H1 (cell line): ENCODE measurements at regions of chr6 and their contacts with region 1.

Region 1: DNA sequence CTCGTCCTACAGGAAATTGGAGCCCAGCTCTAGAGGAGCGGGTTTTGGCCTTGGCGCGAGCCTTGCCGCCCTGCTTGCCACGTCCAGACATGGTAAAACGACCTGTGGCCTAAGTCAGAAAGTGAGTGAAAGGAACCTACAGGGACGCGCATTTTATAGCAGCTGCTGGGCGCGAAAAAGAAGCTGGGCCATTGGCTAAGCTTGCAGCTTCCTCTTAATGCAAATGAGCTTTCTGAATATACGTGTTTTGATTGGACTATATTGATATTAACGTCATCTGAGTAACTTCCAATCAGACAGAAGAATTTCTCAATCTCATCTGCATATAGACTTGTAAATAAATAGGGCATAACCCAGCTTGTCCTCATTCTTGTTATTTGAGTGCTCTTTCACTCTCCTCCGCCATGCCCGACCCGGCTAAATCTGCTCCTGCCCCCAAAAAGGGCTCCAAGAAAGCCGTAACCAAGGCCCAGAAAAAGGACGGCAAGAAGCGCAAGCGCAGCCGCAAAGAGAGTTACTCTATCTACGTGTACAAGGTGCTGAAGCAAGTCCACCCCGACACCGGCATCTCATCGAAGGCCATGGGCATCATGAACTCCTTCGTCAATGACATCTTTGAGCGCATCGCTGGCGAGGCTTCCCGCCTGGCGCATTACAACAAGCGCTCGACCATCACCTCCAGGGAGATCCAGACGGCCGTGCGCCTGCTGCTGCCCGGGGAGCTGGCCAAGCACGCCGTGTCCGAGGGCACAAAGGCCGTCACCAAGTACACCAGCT is 18.9 kb downstream of the OR2B2 start:
- DNase-seq: peak; percentile 88 to 96
- H3K4me3 ChIP-seq: peak overlapping the region; percentile 94 to 99 (median 97)
- H3K27ac ChIP-seq: peak overlapping the region; percentile 95
- H3K4me1 ChIP-seq: peaks cover 3 to 9% (median 3%) of the 10 kb centered on the region in 4 experiments; a peak in 5 of 7 replicates
- H3K27me3 ChIP-seq: no peaks in the 10 kb centered on the region
- CTCF ChIP-seq: no peak
- EP300 ChIP-seq: no peak
- POLR2A ChIP-seq: peak; percentile 99 to 100
- RAD21 ChIP-seq: no peak

Region 2: DNA sequence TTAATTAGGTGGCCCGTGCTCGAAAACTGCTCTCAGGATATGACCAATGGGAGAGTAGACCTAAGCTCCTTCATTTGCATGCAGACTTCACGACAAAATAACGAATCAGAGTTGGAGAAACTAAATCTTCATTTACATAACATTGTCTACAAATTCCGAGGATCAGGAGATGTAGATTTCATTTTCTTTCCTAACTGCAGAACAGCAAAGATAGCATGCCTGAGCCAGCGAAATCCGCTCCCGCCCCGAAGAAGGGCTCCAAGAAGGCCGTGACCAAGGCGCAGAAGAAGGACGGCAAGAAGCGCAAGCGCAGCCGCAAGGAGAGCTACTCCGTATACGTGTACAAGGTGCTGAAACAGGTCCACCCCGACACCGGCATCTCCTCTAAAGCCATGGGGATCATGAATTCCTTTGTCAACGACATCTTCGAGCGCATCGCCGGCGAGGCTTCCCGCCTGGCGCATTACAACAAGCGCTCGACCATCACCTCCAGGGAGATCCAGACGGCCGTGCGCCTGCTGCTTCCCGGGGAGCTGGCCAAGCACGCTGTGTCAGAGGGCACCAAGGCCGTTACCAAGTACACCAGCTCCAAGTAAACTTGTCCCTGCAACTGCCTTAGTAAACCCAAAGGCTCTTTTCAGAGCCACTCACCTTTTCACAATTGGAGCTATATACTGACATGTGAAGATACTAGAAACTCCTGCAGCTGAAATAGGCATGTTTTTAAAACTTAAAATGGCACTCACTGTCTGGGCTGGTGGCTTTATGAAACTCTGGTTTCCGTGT is 1709.5 kb before region 1 on chr6:
- CTCF ChIA-PET with region 1: no interaction called
- POLR2A ChIA-PET with region 1: interaction called, 11 read pairs
- DNase-seq: peak in 1 of 2 experiments; percentile 82
- H3K4me3 ChIP-seq: peak overlapping the region; percentile 45 to 73 (median 70)
- H3K27ac ChIP-seq: peak overlapping the region; percentile 97
- H3K4me1 ChIP-seq: peaks cover 0 to 17% (median 8%) of the 10 kb centered on the region in 4 experiments; a peak in 5 of 7 replicates
- H3K27me3 ChIP-seq: no peaks in the 10 kb centered on the region
- CTCF ChIP-seq: no peak
- EP300 ChIP-seq: no peak
- POLR2A ChIP-seq: peak; percentile 94 to 99
- RAD21 ChIP-seq: no peak

Region 3: DNA sequence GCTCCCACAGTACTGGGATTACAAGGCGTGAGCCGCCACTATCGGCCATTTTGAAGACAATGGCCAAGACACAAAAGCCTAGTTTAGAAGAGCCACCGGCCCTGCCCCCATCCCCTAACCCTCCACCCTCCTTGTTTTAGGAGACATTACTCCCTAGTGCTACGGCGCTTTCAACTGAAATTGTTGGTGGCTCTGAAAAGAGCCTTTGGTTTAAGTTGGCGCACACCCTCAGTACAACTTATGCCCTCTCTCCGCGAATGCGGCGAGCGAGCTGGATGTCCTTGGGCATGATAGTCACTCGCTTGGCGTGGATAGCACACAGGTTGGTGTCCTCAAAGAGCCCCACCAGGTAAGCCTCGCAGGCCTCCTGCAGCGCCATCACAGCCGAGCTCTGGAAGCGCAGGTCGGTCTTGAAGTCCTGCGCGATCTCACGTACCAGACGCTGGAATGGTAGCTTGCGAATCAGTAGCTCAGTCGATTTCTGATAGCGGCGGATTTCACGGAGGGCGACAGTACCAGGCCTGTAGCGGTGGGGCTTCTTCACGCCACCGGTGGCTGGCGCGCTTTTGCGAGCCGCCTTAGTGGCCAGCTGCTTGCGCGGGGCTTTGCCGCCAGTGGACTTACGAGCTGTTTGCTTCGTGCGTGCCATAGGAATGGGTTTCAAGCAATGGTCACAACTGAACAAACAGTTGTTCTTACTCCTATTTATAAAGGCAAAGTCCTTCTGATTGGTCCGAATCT is 1643.1 kb before region 1 on chr6:
- CTCF ChIA-PET with region 1: no interaction called
- POLR2A ChIA-PET with region 1: interaction called, 19 read pairs
- DNase-seq: peak in 1 of 2 experiments; percentile 73
- H3K4me3 ChIP-seq: peak overlapping the region; percentile 75 to 98 (median 90)
- H3K27ac ChIP-seq: peak overlapping the region; percentile 97
- H3K4me1 ChIP-seq: peaks cover 0 to 5% (median 4%) of the 10 kb centered on the region in 4 experiments; a peak in 5 of 7 replicates
- H3K27me3 ChIP-seq: no peaks in the 10 kb centered on the region
- CTCF ChIP-seq: peak in 2 of 3 experiments; percentile 23 to 34; a peak in 2 of 4 replicates
- EP300 ChIP-seq: 0 out of 3 replicates have a peak, but pooled peaks of 1 of the 2 experiments have one; percentile 34
- POLR2A ChIP-seq: peak; percentile 98
- RAD21 ChIP-seq: no peak

Region 4: DNA sequence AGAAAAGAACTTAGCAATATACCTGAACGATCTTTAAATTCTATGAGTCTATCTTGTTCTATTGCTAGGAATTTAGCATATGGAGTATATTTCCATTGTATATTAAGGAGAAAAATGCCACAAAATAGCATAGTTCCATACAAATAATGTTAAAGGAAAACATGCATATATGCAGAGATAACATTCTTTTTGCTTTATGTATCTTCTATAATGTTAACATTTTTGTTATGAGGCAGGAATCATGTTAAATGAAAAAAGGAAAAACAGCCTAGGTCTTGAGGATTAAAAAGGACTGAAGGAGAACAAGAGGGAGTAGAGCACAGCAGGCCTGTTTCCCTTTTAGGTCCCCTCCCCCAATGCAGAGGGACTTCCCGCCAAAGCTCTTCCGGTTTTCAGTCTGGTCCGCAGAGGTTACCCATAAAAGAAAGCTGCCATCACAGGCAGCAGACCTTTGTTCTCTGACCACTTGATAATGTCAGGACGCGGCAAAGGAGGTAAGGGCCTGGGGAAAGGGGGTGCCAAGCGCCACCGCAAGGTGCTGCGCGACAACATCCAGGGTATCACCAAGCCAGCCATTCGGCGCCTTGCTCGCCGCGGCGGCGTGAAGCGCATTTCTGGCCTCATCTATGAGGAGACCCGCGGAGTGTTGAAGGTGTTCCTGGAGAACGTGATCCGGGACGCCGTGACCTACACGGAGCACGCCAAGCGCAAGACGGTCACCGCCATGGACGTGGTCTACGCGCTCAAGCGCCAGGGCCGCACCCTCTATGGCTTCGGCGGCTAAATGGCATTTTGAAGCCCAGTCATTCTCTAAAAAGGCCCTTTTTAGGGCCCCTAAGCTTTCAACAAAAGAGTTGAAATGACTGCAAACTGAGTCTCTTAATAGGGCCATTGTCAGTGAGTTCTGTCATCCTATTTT is 754.2 kb before region 1 on chr6:
- CTCF ChIA-PET with region 1: no interaction called
- POLR2A ChIA-PET with region 1: interaction called, 49 read pairs
- DNase-seq: peak; percentile 91 to 92
- H3K4me3 ChIP-seq: peak overlapping the region; percentile 50 to 95 (median 70)
- H3K27ac ChIP-seq: peak overlapping the region; percentile 95
- H3K4me1 ChIP-seq: peaks cover 0 to 10% (median 4%) of the 10 kb centered on the region in 4 experiments; a peak in 5 of 7 replicates
- H3K27me3 ChIP-seq: no peaks in the 10 kb centered on the region
- CTCF ChIP-seq: no peak
- EP300 ChIP-seq: peak; percentile 40 to 99
- POLR2A ChIP-seq: peak; percentile 91 to 99
- RAD21 ChIP-seq: no peak

Region 5: DNA sequence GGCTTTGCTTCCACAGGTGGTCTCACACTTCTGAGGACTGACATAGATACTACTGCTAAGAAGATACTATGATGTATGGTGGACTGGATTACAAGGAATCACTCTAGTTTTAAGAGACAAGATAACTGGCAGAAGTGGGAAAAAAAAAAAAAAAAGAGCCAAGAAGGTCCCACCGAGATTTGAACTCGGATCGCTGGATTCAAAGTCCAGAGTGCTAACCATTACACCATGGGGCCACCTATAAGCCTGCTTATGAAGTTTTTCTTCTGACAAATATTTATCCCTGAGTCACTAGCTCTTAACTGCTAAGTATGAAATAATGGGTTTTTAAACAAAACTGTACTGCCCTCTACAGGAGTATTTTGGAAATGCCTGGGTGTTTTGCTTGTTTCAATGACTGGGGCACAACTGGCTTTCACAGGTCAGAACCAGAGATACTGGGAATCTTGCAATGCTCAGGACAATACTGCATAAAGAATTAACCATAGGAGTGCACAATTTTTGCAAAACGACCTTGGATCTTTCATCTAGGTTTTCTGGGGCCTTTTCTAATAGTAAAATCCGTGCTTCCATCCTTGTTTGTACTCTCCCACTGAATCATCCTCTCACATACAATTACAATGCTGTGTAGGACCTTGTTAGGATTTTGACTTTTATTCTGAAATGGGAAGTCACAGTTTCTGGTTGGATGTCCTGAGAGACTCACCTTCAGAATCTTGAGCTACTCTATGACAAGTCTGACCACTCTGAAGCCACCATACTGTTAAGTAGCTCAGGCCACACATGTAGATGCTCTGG is 97.4 kb before region 1 on chr6:
- CTCF ChIA-PET with region 1: interaction called, 30 read pairs
- POLR2A ChIA-PET with region 1: interaction called, 23 read pairs
- DNase-seq: peak in 1 of 2 experiments; percentile 75
- H3K4me3 ChIP-seq: peak overlapping the region in 1 of 4 experiments; percentile 37; a peak in 2 of 8 replicates
- H3K27ac ChIP-seq: no peak overlapping the region
- H3K4me1 ChIP-seq: peaks cover 0 to 5% (median 1%) of the 10 kb centered on the region in 4 experiments; a peak in 2 of 7 replicates
- H3K27me3 ChIP-seq: no peaks in the 10 kb centered on the region; a peak in 1 of 7 replicates
- CTCF ChIP-seq: peak in 2 of 3 experiments; percentile 44 to 71; a peak in 3 of 4 replicates
- EP300 ChIP-seq: no peak
- POLR2A ChIP-seq: no peak
- RAD21 ChIP-seq: peak; percentile 66 to 72

Region 6: GRCh38 chr6:27838058-27838944 is 54.9 kb before region 1 on chr6:
- CTCF ChIA-PET with region 1: interaction called, 16 read pairs
- POLR2A ChIA-PET with region 1: interaction called, 644 read pairs
- DNase-seq: peak; percentile 76 to 87
- H3K4me3 ChIP-seq: peak overlapping the region; percentile 77 to 96 (median 93)
- H3K27ac ChIP-seq: peak overlapping the region; percentile 98
- H3K4me1 ChIP-seq: peaks cover 0 to 5% (median 2%) of the 10 kb centered on the region in 4 experiments; a peak in 1 of 7 replicates
- H3K27me3 ChIP-seq: no peaks in the 10 kb centered on the region
- CTCF ChIP-seq: no peak
- EP300 ChIP-seq: no peak
- POLR2A ChIP-seq: peak; percentile 88 to 91
- RAD21 ChIP-seq: no peak

Region 7: GRCh38 chr6:28335564-28336283 is 442.5 kb after region 1 on chr6 and contains the start of gene ZSCAN31:
- CTCF ChIA-PET with region 1: no interaction called
- POLR2A ChIA-PET with region 1: interaction called, 10 read pairs
- DNase-seq: peak; percentile 89 to 95
- H3K4me3 ChIP-seq: peak within 1 kb of the TSS; percentile 86 to 95 (median 91)
- H3K27ac ChIP-seq: peak within 1 kb of the TSS; percentile 95
- H3K4me1 ChIP-seq: no peaks in the 10 kb centered on the region
- H3K27me3 ChIP-seq: no peaks in the 10 kb centered on the region
- CTCF ChIP-seq: no peak
- EP300 ChIP-seq: no peak; a peak in 1 of 3 replicates
- POLR2A ChIP-seq: peak; percentile 86 to 99
- RAD21 ChIP-seq: no peak
- total RNA-seq, gene ZSCAN31: 7.0 and 8.8 TPM in 2 replicates